Mammary epithelial cell (primary cell): ENCODE measurements at regions of chr2 and their contacts with region 1.

Region 1: GRCh38 chr2:127776122-127776780 is 34.7 kb downstream of the WDR33 start:
- DNase-seq: no peak
- H3K4me3 ChIP-seq: no peak overlapping the region
- H3K27ac ChIP-seq: no peak overlapping the region
- H3K4me1 ChIP-seq: peaks cover 6% of the 10 kb centered on the region
- H3K27me3 ChIP-seq: no peaks in the 10 kb centered on the region
- CTCF ChIP-seq: no peak

Region 2: DNA sequence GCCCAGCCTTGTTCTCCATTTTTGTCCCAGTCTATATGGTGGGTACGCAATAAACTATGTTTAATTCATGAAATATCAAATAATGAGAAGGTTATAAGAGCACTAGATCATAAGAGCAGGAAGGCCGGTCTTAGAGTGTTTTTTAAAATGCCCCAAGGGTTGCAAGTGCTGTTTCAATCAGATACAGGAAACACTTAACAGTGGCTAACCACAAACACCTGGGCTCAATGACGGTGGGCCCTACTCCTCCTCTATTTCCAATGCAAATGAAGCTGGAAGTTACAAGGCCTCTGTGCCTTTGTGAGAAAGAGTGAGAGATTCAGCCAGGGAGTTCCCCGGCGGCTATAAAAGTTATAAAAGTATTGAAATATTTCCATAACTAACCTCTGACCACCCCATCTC is 53.6 kb after region 1 on chr2:
- CTCF ChIA-PET with region 1: no interaction called
- dilution Hi-C with region 1: loop called (anchors 5 kb)
- in situ Hi-C with region 1: no loop called
- intact Hi-C with region 1: no loop called
- DNase-seq: peak; percentile 49
- H3K4me3 ChIP-seq: no peak overlapping the region
- H3K27ac ChIP-seq: no peak overlapping the region
- H3K4me1 ChIP-seq: peaks cover 10% of the 10 kb centered on the region
- H3K27me3 ChIP-seq: no peaks in the 10 kb centered on the region
- CTCF ChIP-seq: no peak